Mammary epithelial cell (primary cell): ENCODE measurements at regions of chr12 and their contacts with region 1.

Region 1: GRCh38 chr12:17134315-17134714 is 528.4 kb upstream of the LMO3 start:
- DNase-seq: no peak
- H3K4me3 ChIP-seq: no peak overlapping the region
- H3K27ac ChIP-seq: no peak overlapping the region
- H3K4me1 ChIP-seq: no peaks in the 10 kb centered on the region
- H3K27me3 ChIP-seq: peaks cover 2% of the 10 kb centered on the region
- CTCF ChIP-seq: no peak

Region 2: DNA sequence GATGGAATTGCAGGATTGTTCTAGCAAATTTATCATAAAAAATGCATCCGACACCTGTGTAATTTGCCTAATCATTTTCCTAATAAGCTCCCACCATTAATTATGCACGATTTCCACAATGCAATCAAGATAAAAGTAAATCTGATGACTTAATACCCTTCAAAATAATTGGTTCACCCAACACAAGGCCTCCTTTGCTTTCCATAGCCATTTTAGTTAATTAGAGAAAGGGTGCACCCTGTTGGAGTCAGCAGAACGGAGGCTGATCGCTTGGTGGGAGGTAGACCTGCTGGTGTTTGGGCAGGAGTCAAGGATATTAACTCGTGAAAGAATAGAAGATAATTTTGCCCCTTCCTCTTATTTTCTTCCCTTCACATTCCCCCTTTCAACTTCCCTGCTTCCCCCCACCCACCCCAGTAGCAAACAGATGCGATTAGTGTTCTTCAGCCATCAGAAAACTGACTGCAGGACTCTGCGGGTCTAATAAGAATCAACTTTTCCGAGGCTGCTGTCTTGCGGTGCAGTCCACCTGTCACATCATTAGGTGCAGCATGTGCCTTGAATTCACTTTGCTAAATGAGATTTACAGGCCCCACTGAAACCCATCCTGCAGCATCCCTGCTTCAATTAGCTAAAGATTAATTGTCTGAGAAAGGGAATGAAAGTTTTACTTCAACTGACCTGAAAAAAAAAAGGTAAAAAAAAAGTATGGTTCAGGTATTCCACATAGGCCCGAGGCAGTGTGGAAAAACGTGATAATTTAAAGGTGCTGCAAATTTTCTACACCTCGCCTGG is 25.4 kb after region 1 on chr12:
- CTCF ChIA-PET with region 1: interaction called, 35 read pairs
- dilution Hi-C with region 1: no loop called
- in situ Hi-C with region 1: no loop called
- intact Hi-C with region 1: no loop called
- DNase-seq: no peak
- H3K4me3 ChIP-seq: no peak overlapping the region
- H3K27ac ChIP-seq: no peak overlapping the region
- H3K4me1 ChIP-seq: no peaks in the 10 kb centered on the region
- H3K27me3 ChIP-seq: no peaks in the 10 kb centered on the region
- CTCF ChIP-seq: no peak